CD14-positive monocyte (primary cell): ENCODE measurements at regions of chr1 and their contacts with region 1.

Region 1: GRCh38 chr1:10209905-10210810 is at the start of gene KIF1B:
- DNase-seq: peak; percentile 95 to 98 (median 98)
- H3K4me3 ChIP-seq: peak within 1 kb of the TSS; percentile 89 to 94 (median 91)
- H3K4me3 Mint-ChIP-seq: peak within 1 kb of the TSS; percentile 92 to 94
- H3K27ac ChIP-seq: peak within 1 kb of the TSS; percentile 96 to 97
- H3K27ac Mint-ChIP-seq: peak within 1 kb of the TSS; percentile 96 to 98 (median 97)
- H3K4me1 ChIP-seq: peaks cover 30 to 37% of the 10 kb centered on the region in 2 donors
- H3K4me1 Mint-ChIP-seq: peaks cover 37% of the 10 kb centered on the region
- H3K27me3 ChIP-seq: no peaks in the 10 kb centered on the region
- H3K27me3 Mint-ChIP-seq: peaks cover 3 to 7% (median 4%) of the 10 kb centered on the region in 3 donors
- CTCF ChIP-seq: peak; percentile 95
- polyA plus RNA-seq, gene KIF1B: 3.0 to 7.0 (median 3.3) TPM

Region 2: DNA sequence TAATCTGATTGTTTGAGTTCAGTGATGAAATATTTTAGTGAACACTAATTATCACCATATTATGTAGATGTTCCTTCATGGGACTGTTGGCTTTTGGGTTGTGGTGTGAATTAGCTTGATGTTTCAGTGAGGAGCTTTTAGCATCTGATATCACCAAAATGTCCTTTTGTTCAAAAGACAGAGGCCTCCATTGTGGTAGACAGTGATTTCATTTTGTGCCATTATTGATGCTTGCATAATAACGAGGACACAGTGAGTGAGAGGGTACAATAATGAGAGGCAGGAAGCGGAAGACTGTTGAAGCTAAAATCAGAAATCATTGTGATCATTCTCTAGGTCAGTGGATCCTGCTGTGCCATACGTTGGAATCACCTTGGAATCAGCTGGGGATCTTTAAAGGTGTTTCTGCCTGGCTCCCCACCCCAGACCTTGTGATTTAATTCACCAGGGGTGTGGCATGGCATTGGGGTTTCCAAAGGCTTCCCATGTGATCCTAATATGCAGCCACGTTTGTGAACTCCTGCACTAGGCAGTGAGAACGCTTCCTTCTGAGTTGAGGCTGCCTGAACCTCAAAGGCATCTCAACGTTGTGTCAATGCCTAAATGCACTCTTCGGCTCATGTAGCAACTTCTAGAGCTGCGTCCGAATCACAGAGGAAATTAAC is 81.9 kb before region 1 on chr1:
- intact Hi-C with region 1: no loop called
- DNase-seq: no peak
- H3K4me3 ChIP-seq: no peak overlapping the region
- H3K4me3 Mint-ChIP-seq: no peak overlapping the region
- H3K27ac ChIP-seq: no peak overlapping the region
- H3K27ac Mint-ChIP-seq: peak overlapping the region in 1 of 7 donors; percentile 6
- H3K4me1 ChIP-seq: no peaks in the 10 kb centered on the region
- H3K4me1 Mint-ChIP-seq: no peaks in the 10 kb centered on the region
- H3K27me3 ChIP-seq: no peaks in the 10 kb centered on the region
- H3K27me3 Mint-ChIP-seq: no peaks in the 10 kb centered on the region
- CTCF ChIP-seq: no peak

Region 3: DNA sequence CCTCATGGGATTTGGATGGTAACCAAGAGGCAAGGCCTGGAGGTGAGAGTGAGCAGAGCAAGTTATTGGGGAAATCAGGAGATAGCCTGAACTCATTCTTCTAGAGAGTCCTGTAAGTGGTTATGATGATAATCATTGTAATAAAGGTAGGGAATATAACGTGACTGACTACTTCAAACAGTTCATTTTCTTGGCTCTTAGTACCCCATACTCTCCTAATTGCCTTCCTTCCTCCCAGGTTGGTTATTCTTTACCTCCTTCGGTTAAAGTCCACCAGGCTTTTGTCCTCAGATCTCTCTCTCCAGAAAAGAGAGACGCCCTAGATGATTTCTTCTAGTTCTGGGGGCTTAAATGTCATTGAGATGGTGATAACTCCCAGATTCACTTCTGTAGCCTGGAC is 35.5 kb after region 1 on chr1:
- intact Hi-C with region 1: loop called in 1 of 2 experiments (anchors 5 kb)
- DNase-seq: no peak
- H3K4me3 ChIP-seq: no peak overlapping the region
- H3K4me3 Mint-ChIP-seq: no peak overlapping the region
- H3K27ac ChIP-seq: no peak overlapping the region
- H3K27ac Mint-ChIP-seq: no peak overlapping the region
- H3K4me1 ChIP-seq: peaks cover 3 to 14% of the 10 kb centered on the region in 2 donors
- H3K4me1 Mint-ChIP-seq: peaks cover 7% of the 10 kb centered on the region
- H3K27me3 ChIP-seq: no peaks in the 10 kb centered on the region
- H3K27me3 Mint-ChIP-seq: no peaks in the 10 kb centered on the region
- CTCF ChIP-seq: no peak